Sigmoid colon (tissue), 7 donors: ENCODE measurements at regions of chr3 and their contacts with region 1.

Region 1: DNA sequence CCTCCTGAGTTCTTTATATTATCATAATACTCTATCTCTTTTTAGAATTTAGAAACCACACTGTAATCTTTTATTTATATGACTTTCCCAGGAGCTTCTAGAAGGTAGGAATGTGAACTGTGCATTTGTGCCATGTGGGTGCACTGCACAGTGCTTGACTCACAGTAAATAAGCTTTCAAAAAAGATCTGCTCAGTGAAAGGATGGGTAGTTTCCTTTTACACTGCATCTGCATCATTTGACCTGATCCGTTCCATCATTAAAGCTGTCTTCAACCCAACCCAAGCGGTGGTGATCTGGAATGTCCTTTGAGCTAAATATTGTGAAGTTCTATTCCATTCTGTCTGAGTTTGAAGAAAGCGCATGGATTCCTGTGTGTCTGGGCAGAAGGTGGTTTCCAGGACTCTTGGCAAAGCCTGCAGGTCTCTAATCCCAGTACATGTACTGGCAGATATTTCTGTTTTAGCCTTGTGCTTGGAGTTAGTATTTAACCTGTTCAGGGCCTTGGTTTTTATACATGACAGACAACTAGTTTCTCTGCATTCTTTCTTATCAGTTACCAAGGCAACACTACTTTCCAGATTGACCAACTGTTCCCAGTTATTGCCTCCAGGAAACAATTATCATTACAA is 96.7 kb downstream of the DHX30 start:
- DNase-seq: no peak
- H3K4me3 ChIP-seq: no peak overlapping the region
- H3K27ac ChIP-seq: peak overlapping the region in 1 of 4 donors; percentile 26
- H3K4me1 ChIP-seq: peaks cover 0 to 33% (median 20%) of the 10 kb centered on the region in 4 donors
- H3K27me3 ChIP-seq: no peaks in the 10 kb centered on the region
- CTCF ChIP-seq: no peak
- EP300 ChIP-seq: no peak
- POLR2A ChIP-seq: no peak

Region 2: DNA sequence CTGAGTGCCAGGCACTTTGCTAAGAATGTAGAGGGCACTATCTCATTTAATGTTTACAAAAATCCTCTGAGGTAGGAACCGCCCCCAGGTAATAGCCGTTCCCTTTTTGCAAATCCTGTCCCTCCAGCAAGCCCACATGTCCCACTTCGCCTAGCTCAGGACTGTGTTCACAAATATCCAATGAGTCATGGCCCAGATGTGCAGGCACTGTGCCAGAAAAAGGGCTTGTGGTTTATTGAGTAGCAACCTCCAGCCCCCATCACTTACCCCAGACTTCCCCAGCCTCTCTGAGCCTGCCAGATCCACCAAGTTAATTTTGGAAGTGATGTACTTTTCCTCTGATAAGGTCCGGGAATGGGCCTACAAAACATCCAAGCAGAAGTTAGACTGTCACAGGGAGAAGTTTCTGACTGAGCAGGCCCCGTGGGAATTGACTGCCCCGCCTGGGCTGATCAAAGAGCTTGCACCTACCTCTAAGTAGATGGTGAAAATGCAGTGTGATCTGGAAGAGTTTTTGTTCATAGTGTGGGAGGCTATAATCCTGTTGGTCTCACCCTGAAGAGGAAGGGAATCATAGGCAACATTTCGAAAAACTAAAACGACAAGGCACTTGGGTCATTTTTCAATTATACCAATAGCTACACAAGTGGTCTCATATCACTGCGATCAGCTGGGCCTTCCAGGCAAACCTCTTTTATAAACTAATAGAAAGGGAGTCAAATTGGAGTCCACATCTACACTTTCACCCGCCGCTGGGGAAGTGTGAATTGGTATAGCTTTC is 632.7 kb before region 1 on chr3:
- intact Hi-C with region 1: no loop called
- DNase-seq: peak; percentile 89
- H3K4me3 ChIP-seq: no peak overlapping the region
- H3K27ac ChIP-seq: no peak overlapping the region
- H3K4me1 ChIP-seq: peaks cover 0 to 9% (median 0%) of the 10 kb centered on the region in 4 donors
- H3K27me3 ChIP-seq: no peaks in the 10 kb centered on the region
- CTCF ChIP-seq: no peak
- EP300 ChIP-seq: no peak
- POLR2A ChIP-seq: no peak

Region 3: GRCh38 chr3:47932421-47932820 is 32.8 kb after region 1 on chr3:
- intact Hi-C with region 1: loop called (anchors 5 kb)
- DNase-seq: no peak
- H3K4me3 ChIP-seq: no peak overlapping the region
- H3K27ac ChIP-seq: no peak overlapping the region
- H3K4me1 ChIP-seq: peaks cover 0 to 12% (median 0%) of the 10 kb centered on the region in 4 donors
- H3K27me3 ChIP-seq: no peaks in the 10 kb centered on the region
- CTCF ChIP-seq: no peak
- EP300 ChIP-seq: no peak
- POLR2A ChIP-seq: no peak

Region 4: GRCh38 chr3:47976135-47976732 is 76.6 kb after region 1 on chr3:
- intact Hi-C with region 1: loop called (anchors 5 kb)
- DNase-seq: no peak
- H3K4me3 ChIP-seq: no peak overlapping the region
- H3K27ac ChIP-seq: no peak overlapping the region
- H3K4me1 ChIP-seq: peaks cover 0 to 8% (median 2%) of the 10 kb centered on the region in 4 donors
- H3K27me3 ChIP-seq: no peaks in the 10 kb centered on the region
- CTCF ChIP-seq: no peak
- EP300 ChIP-seq: no peak
- POLR2A ChIP-seq: no peak